ENCODE measurements at regions of chr14 and their contacts with region 1.

Region 1: GRCh38 chr14:94080471-94081289 is at the start of gene DDX24:
- DNase-seq: peak; percentile 92 to 97 (median 96)
- ATAC-seq: peak; percentile 99
- H3K4me3 ChIP-seq: peak within 1 kb of the TSS; percentile 74
- H3K4me3 Mint-ChIP-seq: peak within 1 kb of the TSS; percentile 90 to 100 (median 99)
- H3K27ac ChIP-seq: peak within 1 kb of the TSS; percentile 98
- H3K27ac Mint-ChIP-seq: peak within 1 kb of the TSS; percentile 97 to 100 (median 99)
- H3K4me1 ChIP-seq: peaks cover 32 to 38% of the 10 kb centered on the region in 2 donors
- H3K4me1 Mint-ChIP-seq: peaks cover 28 to 60% (median 53%) of the 10 kb centered on the region in 7 donors
- H3K27me3 ChIP-seq: no peaks in the 10 kb centered on the region
- H3K27me3 Mint-ChIP-seq: no peaks in the 10 kb centered on the region
- total RNA-seq, gene DDX24: 214 to 438 (median 333) TPM

Region 2: DNA sequence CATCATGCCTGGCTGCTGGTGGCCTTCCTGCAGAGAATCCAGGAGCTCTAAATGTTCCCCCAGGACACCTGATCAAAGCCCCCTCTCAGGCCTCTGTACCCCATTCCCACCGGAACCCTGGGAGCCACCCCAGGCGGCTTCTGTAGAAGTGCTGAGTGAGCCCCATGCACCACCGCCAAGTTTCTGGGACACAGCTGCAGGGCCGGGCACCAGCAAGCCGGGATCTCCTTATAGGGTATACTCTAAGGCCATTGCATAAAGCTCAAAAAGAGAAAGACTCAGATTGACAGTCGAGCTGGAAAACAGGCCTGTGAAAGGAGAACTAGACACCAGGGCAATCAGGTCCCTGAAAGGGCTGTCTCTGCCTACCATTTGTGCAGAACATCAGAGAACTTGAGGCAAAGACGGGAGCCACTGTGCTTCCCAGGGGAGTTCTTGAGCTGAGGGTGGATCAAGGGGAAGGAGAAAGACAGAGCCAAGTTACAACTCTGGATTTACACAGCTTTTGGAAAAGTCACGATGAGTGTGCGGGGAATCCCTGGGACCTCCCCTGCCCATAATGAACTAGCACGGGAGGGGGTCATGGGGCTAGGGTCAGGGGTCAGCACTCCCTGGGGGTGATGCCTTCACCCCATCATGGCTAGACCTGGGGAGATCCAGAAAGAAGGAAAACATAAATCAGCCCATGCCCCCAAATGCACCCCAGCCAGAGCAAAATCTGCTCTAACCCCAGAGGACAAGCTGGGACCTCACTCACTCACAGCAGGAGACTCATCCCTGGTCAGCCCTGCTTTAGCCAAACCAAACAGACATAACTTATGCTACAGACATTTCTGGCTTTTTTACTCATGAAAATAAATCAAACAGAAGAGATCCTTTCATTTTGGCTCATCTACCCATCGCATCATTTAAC is 1016.0 kb before region 1 on chr14:
- CTCF ChIA-PET with region 1: no interaction called
- POLR2A ChIA-PET with region 1: no interaction called
- intact Hi-C with region 1: no loop called
- DNase-seq: no peak
- ATAC-seq: no peak
- H3K4me3 ChIP-seq: no peak overlapping the region
- H3K4me3 Mint-ChIP-seq: peak overlapping the region in 1 of 10 donors; percentile 74
- H3K27ac ChIP-seq: no peak overlapping the region
- H3K27ac Mint-ChIP-seq: peak overlapping the region in 4 of 9 donors; percentile 45 to 93 (median 76)
- H3K4me1 ChIP-seq: peaks cover 11 to 21% of the 10 kb centered on the region in 2 donors
- H3K4me1 Mint-ChIP-seq: peaks cover 44 to 58% (median 54%) of the 10 kb centered on the region in 7 donors
- H3K27me3 ChIP-seq: no peaks in the 10 kb centered on the region
- H3K27me3 Mint-ChIP-seq: no peaks in the 10 kb centered on the region

Region 3: GRCh38 chr14:93332853-93333630 is 747.6 kb before region 1 on chr14 and contains the start of gene BTBD7:
- CTCF ChIA-PET with region 1: no interaction called
- POLR2A ChIA-PET with region 1: no interaction called
- intact Hi-C with region 1: loop called in 1 of 2 experiments (anchors 1 kb)
- DNase-seq: peak; percentile 91 to 95 (median 93)
- ATAC-seq: peak; percentile 96
- H3K4me3 ChIP-seq: peak within 1 kb of the TSS; percentile 86
- H3K4me3 Mint-ChIP-seq: peak within 1 kb of the TSS; percentile 90 to 96 (median 92)
- H3K27ac ChIP-seq: peak within 1 kb of the TSS; percentile 90
- H3K27ac Mint-ChIP-seq: peak within 1 kb of the TSS; percentile 87 to 98 (median 93)
- H3K4me1 ChIP-seq: peaks cover 19 to 21% of the 10 kb centered on the region in 2 donors
- H3K4me1 Mint-ChIP-seq: peaks cover 34 to 64% (median 54%) of the 10 kb centered on the region in 7 donors
- H3K27me3 ChIP-seq: no peaks in the 10 kb centered on the region
- H3K27me3 Mint-ChIP-seq: no peaks in the 10 kb centered on the region
- total RNA-seq, gene BTBD7: 18.5 to 31.7 (median 27.5) TPM

Region 4: DNA sequence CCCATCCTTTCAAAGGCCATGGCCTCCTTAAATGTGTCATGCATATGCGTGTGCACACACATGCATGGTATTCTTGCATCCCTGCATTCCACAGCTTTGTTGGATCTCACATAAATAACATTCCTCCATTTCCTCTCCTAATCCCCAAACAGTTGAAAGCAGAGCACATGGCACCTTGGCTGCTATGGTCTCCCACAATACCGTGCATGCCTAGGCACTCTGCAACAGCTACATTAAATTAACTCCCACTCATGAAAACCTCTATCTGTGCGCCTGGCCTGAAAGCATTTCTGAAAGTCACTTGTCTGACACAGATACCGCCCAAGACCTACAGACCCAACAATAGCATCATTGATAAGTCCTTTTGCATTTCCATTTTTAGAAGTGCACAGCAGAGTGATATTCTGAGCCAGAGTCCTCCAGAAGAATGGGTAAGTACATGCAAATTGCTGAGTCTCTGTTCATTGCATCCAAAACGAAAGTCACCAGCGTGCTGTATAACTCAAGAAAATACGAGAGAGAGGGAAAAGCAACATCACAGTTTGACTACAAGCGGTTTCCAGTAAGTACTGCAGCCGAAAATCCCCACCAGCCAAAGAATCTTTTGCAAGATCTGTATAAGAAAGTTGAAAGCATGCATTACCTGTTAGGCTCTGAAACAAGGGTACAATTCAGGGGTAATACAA is 104.7 kb before region 1 on chr14:
- CTCF ChIA-PET with region 1: interaction called, 3 read pairs
- POLR2A ChIA-PET with region 1: interaction called, 3 read pairs
- intact Hi-C with region 1: loop called in 1 of 2 experiments (anchors 5 kb)
- DNase-seq: no peak
- ATAC-seq: no peak
- H3K4me3 ChIP-seq: peak overlapping the region; percentile 9
- H3K4me3 Mint-ChIP-seq: peak overlapping the region in 9 of 10 donors; percentile 18 to 92 (median 59)
- H3K27ac ChIP-seq: no peak overlapping the region
- H3K27ac Mint-ChIP-seq: peak overlapping the region in 3 of 9 donors; percentile 12 to 97 (median 28)
- H3K4me1 ChIP-seq: peaks cover 41 to 46% of the 10 kb centered on the region in 2 donors
- H3K4me1 Mint-ChIP-seq: peaks cover 39 to 94% (median 62%) of the 10 kb centered on the region in 7 donors
- H3K27me3 ChIP-seq: no peaks in the 10 kb centered on the region
- H3K27me3 Mint-ChIP-seq: peaks cover 0 to 6% (median 6%) of the 10 kb centered on the region in 5 donors

Region 5: GRCh38 chr14:94056579-94057308 is 23.9 kb before region 1 on chr14:
- CTCF ChIA-PET with region 1: no interaction called
- POLR2A ChIA-PET with region 1: interaction called, 8 read pairs
- intact Hi-C with region 1: loop called in 1 of 2 experiments (anchors 1 kb)
- DNase-seq: peak in 2 of 9 donors; percentile 25 to 46
- ATAC-seq: peak; percentile 40
- H3K4me3 ChIP-seq: no peak overlapping the region
- H3K4me3 Mint-ChIP-seq: peak overlapping the region in 6 of 10 donors; percentile 10 to 49 (median 36)
- H3K27ac ChIP-seq: no peak overlapping the region
- H3K27ac Mint-ChIP-seq: peak overlapping the region; percentile 17 to 83 (median 64)
- H3K4me1 ChIP-seq: peaks cover 33 to 39% of the 10 kb centered on the region in 2 donors
- H3K4me1 Mint-ChIP-seq: peaks cover 29 to 79% (median 72%) of the 10 kb centered on the region in 7 donors
- H3K27me3 ChIP-seq: no peaks in the 10 kb centered on the region
- H3K27me3 Mint-ChIP-seq: no peaks in the 10 kb centered on the region

Region 6: GRCh38 chr14:94136575-94137331 is 56.1 kb after region 1 on chr14:
- CTCF ChIA-PET with region 1: interaction called, 6 read pairs
- POLR2A ChIA-PET with region 1: interaction called, 29 read pairs
- intact Hi-C with region 1: loop called in 1 of 2 experiments (anchors 2 kb)
- DNase-seq: peak; percentile 59 to 84 (median 73)
- ATAC-seq: peak; percentile 96
- H3K4me3 ChIP-seq: no peak overlapping the region
- H3K4me3 Mint-ChIP-seq: no peak overlapping the region
- H3K27ac ChIP-seq: no peak overlapping the region
- H3K27ac Mint-ChIP-seq: no peak overlapping the region
- H3K4me1 ChIP-seq: no peaks in the 10 kb centered on the region
- H3K4me1 Mint-ChIP-seq: peaks cover 0 to 12% (median 0%) of the 10 kb centered on the region in 7 donors
- H3K27me3 ChIP-seq: no peaks in the 10 kb centered on the region
- H3K27me3 Mint-ChIP-seq: peaks cover 0 to 34% (median 4%) of the 10 kb centered on the region in 5 donors

Region 7: DNA sequence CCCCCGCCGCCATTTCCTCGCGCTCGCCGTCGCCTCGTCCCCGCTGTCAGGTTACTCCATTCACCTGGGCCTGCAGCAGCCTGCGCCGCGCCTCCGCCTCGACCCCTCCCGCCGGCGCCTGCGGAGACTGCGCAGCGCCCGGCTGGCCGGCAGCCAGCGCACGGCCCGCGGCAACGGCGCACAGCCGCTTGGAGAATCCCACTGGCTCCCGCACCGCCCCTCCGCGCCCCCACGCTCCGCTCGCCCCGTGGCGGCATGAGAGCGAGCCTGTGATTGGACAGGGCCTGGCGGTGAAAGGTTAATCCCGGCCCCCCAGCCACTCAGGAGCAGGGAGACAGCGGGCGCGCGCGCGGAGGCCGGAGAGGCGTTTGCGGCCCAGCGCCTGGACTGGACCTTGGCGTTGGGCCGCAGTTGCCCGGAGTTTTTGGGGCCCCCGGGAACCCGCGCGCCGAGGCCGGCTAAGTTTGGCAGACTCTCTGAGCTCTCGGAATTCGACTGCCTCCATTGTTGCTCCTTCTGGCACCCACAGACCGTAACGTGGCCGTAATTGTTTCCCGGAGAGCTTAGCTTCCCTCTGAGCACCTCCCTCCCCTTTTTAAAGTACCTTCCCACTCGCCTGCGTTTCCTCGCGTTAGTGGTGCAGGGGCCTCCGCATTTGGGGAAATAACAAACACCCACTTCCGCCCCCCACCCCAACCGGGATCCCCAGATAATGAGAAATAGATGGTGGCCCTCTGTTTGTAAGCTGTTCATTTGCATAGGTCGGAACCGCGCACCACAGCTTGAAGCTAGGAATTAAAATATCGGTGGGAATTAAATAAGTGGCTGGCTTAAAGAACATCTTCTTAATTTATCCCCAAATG is 1076.9 kb after region 1 on chr14 and contains the start of gene DICER1:
- CTCF ChIA-PET with region 1: no interaction called
- POLR2A ChIA-PET with region 1: no interaction called
- intact Hi-C with region 1: loop called in 1 of 2 experiments (anchors 10 kb)
- DNase-seq: peak; percentile 84 to 98 (median 93)
- ATAC-seq: peak; percentile 92
- H3K4me3 ChIP-seq: peak within 1 kb of the TSS; percentile 87
- H3K4me3 Mint-ChIP-seq: peak within 1 kb of the TSS; percentile 94 to 99 (median 98)
- H3K27ac ChIP-seq: peak within 1 kb of the TSS; percentile 82
- H3K27ac Mint-ChIP-seq: peak within 1 kb of the TSS; percentile 97 to 100 (median 99)
- H3K4me1 ChIP-seq: peaks cover 31 to 36% of the 10 kb centered on the region in 2 donors
- H3K4me1 Mint-ChIP-seq: peaks cover 32 to 55% (median 42%) of the 10 kb centered on the region in 7 donors
- H3K27me3 ChIP-seq: no peaks in the 10 kb centered on the region
- H3K27me3 Mint-ChIP-seq: no peaks in the 10 kb centered on the region
- total RNA-seq, gene DICER1: 61.1 to 78.2 (median 67.4) TPM